Mammary epithelial cell (primary cell): ENCODE measurements at regions of chr6 and their contacts with region 1.

Region 1: DNA sequence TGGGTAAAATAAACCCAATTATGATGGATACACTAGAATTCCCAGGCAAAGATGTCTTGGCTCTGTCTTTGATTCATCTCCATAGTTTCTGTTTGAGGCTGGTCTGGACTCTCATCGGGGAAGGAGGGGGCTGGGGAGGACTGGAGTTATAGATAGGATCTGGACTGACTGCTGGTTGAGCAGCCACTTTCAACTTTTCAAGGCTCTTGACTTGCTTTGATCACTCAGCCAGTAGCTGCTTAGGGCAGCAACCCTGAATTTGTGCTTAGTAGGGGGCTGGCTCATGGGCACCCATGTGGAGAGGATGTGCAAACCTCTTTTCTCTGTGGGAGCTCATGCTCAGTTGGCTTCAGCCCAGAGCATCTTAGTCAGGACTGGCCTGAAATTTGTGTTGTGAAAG is 114.0 kb upstream of the NEDD9 start:
- DNase-seq: no peak
- H3K4me3 ChIP-seq: no peak overlapping the region
- H3K27ac ChIP-seq: no peak overlapping the region
- H3K4me1 ChIP-seq: peaks cover 18% of the 10 kb centered on the region
- H3K27me3 ChIP-seq: no peaks in the 10 kb centered on the region
- CTCF ChIP-seq: no peak

Region 2: DNA sequence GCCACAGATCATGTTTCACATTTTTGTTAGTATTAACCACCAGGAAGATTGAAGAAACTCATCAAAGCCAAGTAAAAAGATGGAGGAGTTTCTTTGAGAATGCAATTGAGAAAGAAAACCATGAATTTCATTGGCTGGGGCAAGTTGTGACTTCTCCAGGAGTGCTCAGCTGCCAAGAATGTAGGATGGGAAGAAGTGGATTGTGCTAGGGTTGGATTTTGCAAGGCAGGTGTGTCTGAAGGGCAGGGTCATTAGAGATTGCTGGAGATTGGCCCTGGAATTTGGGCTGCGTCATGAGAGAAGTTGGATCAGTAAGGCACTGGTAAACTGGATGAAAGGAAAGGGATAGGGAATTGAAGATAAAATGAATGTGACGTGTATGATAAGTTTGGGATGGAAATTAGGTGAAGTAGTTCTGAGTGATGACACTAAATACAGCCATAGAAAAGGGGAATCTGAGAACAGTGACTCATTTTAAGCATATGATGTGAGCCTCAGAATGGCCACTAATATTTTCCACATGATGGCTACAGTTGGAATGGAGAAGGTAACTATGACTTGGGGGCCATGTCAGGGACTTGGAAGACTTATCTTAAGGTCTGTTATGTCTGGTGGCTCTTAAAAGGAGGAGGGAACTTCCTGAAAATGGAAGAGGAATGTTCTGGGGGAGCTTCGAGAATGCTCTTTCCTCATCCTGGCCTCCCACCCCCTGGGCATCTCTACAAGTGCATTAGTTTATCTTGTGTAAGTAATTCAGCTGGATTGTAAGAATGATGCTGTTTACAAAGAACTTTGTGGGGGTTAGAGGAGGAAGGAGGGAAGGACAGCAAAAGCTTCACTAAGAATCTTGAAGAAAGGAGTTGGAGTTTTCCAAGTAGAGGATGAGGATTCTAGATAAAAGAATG is 207.2 kb before region 1 on chr6:
- CTCF ChIA-PET with region 1: no interaction called
- dilution Hi-C with region 1: no loop called
- in situ Hi-C with region 1: loop called in 1 of 2 experiments (anchors 10 kb)
- intact Hi-C with region 1: loop called (anchors 1 kb)
- DNase-seq: peak; percentile 97
- H3K4me3 ChIP-seq: peak overlapping the region in 2 of 3 experiments; percentile 2 to 23
- H3K27ac ChIP-seq: peak overlapping the region; percentile 94
- H3K4me1 ChIP-seq: peaks cover 51% of the 10 kb centered on the region
- H3K27me3 ChIP-seq: no peaks in the 10 kb centered on the region
- CTCF ChIP-seq: no peak

Region 3: GRCh38 chr6:11172501-11173332 is 173.8 kb before region 1 on chr6:
- CTCF ChIA-PET with region 1: no interaction called
- dilution Hi-C with region 1: no loop called
- in situ Hi-C with region 1: no loop called
- intact Hi-C with region 1: loop called (anchors 10 kb)
- DNase-seq: peak; percentile 32
- H3K4me3 ChIP-seq: no peak overlapping the region
- H3K27ac ChIP-seq: no peak overlapping the region
- H3K4me1 ChIP-seq: peaks cover 8% of the 10 kb centered on the region
- H3K27me3 ChIP-seq: no peaks in the 10 kb centered on the region
- CTCF ChIP-seq: peak; percentile 72 to 84

Region 4: GRCh38 chr6:11224252-11224965 is 122.1 kb before region 1 on chr6:
- CTCF ChIA-PET with region 1: no interaction called
- dilution Hi-C with region 1: no loop called
- in situ Hi-C with region 1: loop called in 1 of 2 experiments (anchors 10 kb)
- intact Hi-C with region 1: no loop called
- DNase-seq: no peak
- H3K4me3 ChIP-seq: no peak overlapping the region
- H3K27ac ChIP-seq: no peak overlapping the region
- H3K4me1 ChIP-seq: peaks cover 33% of the 10 kb centered on the region
- H3K27me3 ChIP-seq: no peaks in the 10 kb centered on the region
- CTCF ChIP-seq: no peak

Region 5: GRCh38 chr6:11317885-11318771 is 28.4 kb before region 1 on chr6:
- CTCF ChIA-PET with region 1: no interaction called
- dilution Hi-C with region 1: no loop called
- in situ Hi-C with region 1: no loop called
- intact Hi-C with region 1: loop called (anchors 1 kb)
- DNase-seq: peak; percentile 99
- H3K4me3 ChIP-seq: no peak overlapping the region
- H3K27ac ChIP-seq: peak overlapping the region; percentile 96
- H3K4me1 ChIP-seq: peaks cover 51% of the 10 kb centered on the region
- H3K27me3 ChIP-seq: no peaks in the 10 kb centered on the region
- CTCF ChIP-seq: no peak

Region 6: DNA sequence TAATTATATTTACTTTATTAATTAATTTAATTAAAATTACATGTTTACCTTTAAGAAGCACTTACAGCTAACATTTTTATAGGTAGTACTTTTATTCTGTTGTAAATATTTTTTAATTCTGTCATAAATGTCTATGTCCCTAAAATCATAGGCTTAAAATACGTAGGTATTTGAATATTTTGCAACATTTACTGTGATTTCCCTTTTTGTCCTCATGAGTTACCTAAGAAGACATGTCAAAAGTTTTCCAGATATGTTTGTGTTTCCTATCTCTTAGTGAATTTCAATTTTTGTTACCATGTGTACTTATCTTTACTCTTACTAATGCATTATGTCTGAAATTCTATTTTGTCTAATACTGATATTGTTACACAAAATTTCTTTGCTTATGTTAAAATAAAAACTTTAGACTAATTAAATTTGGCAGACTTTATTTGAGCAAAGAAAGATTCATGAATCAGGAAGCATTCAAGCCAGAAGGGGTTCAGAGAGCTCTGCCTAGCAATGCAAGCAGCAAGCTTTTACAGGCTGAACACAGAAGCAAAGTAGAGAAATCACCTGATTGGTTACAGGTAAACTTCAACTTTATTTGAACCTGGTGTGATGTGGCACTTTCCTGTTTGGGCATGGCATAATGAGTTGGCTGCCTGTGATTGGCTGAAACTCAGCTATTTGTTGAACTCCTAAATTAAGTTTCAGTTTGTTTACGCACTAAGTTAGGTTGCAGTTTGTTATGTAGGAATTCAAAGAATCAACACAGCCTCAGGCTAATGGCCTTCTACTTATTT is 67.9 kb after region 1 on chr6:
- CTCF ChIA-PET with region 1: no interaction called
- dilution Hi-C with region 1: no loop called
- in situ Hi-C with region 1: no loop called
- intact Hi-C with region 1: loop called (anchors 1 kb)
- DNase-seq: peak; percentile 93
- H3K4me3 ChIP-seq: peak overlapping the region in 1 of 3 experiments; percentile 26
- H3K27ac ChIP-seq: peak overlapping the region; percentile 96
- H3K4me1 ChIP-seq: peaks cover 4% of the 10 kb centered on the region
- H3K27me3 ChIP-seq: no peaks in the 10 kb centered on the region
- CTCF ChIP-seq: no peak